ENCODE measurements at regions of chr3 and their contacts with region 1.

Region 1: DNA sequence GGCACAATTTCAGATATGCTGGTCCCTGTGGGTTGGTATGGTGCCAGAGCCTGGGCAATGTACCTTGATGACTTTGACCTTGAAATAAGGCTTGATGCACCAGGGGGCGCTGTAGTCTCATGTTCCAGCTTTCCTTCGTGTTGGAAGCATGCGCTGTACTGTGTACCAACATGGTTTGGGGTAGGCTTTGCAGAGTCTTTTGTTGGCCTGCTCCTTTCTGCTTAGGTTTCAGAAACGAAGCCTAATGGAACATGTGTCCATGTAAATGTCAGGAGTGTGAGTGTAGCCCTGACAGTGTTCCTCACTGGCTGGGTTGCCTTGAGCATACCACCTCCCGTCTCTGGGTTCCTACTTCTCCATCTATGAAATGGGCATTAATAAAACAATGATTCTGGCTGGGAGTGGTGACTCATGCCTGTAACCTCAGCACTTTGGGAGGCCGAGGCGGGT is 3.6 kb upstream of the CCR4 start:
- DNase-seq: peak; percentile 83 to 98 (median 92)
- ATAC-seq: peak; percentile 68
- H3K4me3 ChIP-seq: no peak overlapping the region
- H3K4me3 Mint-ChIP-seq: no peak overlapping the region
- H3K27ac ChIP-seq: no peak overlapping the region
- H3K27ac Mint-ChIP-seq: no peak overlapping the region
- H3K4me1 ChIP-seq: peaks cover 30% of the 10 kb centered on the region
- H3K4me1 Mint-ChIP-seq: peaks cover 47% of the 10 kb centered on the region
- H3K27me3 ChIP-seq: no peaks in the 10 kb centered on the region
- H3K27me3 Mint-ChIP-seq: no peaks in the 10 kb centered on the region
- CTCF ChIP-seq: peak; percentile 85

Region 2: DNA sequence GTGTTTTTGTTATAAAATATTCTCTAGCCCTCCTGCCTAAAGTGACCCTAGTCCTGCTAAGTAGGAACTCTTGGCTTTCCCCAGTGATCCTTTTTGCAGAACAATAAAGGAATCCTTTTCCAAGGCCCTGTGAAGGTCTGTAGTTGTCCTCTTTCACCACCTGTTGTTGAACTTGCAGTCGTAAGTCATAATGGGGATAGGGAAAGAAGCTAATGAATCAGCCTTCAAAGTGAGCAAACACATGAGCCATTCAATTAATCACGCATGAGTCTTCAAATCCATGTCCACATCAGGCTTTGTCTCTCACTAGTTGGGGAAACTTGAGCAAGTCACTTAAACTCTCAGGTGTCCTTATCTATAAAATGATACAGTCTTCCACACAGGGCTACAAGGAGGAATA is 938.7 kb before region 1 on chr3:
- CTCF ChIA-PET with region 1: no interaction called
- POLR2A ChIA-PET with region 1: no interaction called
- intact Hi-C with region 1: no loop called
- DNase-seq: no peak
- ATAC-seq: no peak
- H3K4me3 ChIP-seq: no peak overlapping the region
- H3K4me3 Mint-ChIP-seq: no peak overlapping the region
- H3K27ac ChIP-seq: no peak overlapping the region
- H3K27ac Mint-ChIP-seq: no peak overlapping the region
- H3K4me1 ChIP-seq: no peaks in the 10 kb centered on the region
- H3K4me1 Mint-ChIP-seq: peaks cover 8% of the 10 kb centered on the region
- H3K27me3 ChIP-seq: peaks cover 0 to 4% of the 10 kb centered on the region in 2 experiments
- H3K27me3 Mint-ChIP-seq: peaks cover 28% of the 10 kb centered on the region
- CTCF ChIP-seq: no peak

Region 3: GRCh38 chr3:33006081-33006480 is 58.3 kb after region 1 on chr3:
- CTCF ChIA-PET with region 1: interaction called, 5 read pairs
- POLR2A ChIA-PET with region 1: interaction called, 3 read pairs
- intact Hi-C with region 1: loop called in 1 of 2 experiments (anchors 5 kb)
- DNase-seq: peak in 6 of 14 experiments; percentile 16 to 68 (median 42)
- ATAC-seq: no peak
- H3K4me3 ChIP-seq: no peak overlapping the region
- H3K4me3 Mint-ChIP-seq: no peak overlapping the region
- H3K27ac ChIP-seq: no peak overlapping the region
- H3K27ac Mint-ChIP-seq: peak overlapping the region; percentile 64
- H3K4me1 ChIP-seq: peaks cover 54% of the 10 kb centered on the region
- H3K4me1 Mint-ChIP-seq: peaks cover 45% of the 10 kb centered on the region
- H3K27me3 ChIP-seq: no peaks in the 10 kb centered on the region
- H3K27me3 Mint-ChIP-seq: no peaks in the 10 kb centered on the region
- CTCF ChIP-seq: no peak

Region 4: DNA sequence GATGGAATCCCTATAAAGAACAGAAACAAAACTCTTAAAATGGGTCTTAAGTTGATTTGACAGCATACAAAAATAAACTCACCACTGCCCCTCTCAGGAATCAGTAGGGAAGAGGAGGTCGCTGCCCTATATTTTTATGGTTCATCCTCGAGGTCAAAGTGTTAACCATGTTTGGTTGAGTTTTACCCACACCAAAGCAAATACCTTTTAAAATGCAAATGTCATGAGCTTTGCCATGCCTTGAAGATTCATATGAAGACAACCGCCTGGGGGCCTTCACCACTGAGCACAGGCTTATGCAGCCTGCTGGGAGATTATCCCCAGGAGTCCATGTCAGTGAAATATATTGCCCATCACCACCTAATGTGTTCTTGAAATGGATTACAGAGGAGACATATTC is 83.0 kb after region 1 on chr3:
- CTCF ChIA-PET with region 1: interaction called, 17 read pairs
- POLR2A ChIA-PET with region 1: no interaction called
- intact Hi-C with region 1: no loop called
- DNase-seq: peak in 6 of 14 experiments; percentile 16 to 77 (median 58)
- ATAC-seq: peak; percentile 79
- H3K4me3 ChIP-seq: no peak overlapping the region
- H3K4me3 Mint-ChIP-seq: no peak overlapping the region
- H3K27ac ChIP-seq: no peak overlapping the region
- H3K27ac Mint-ChIP-seq: peak overlapping the region; percentile 50
- H3K4me1 ChIP-seq: peaks cover 18% of the 10 kb centered on the region
- H3K4me1 Mint-ChIP-seq: peaks cover 25% of the 10 kb centered on the region
- H3K27me3 ChIP-seq: no peaks in the 10 kb centered on the region
- H3K27me3 Mint-ChIP-seq: no peaks in the 10 kb centered on the region
- CTCF ChIP-seq: peak; percentile 33

Region 5: DNA sequence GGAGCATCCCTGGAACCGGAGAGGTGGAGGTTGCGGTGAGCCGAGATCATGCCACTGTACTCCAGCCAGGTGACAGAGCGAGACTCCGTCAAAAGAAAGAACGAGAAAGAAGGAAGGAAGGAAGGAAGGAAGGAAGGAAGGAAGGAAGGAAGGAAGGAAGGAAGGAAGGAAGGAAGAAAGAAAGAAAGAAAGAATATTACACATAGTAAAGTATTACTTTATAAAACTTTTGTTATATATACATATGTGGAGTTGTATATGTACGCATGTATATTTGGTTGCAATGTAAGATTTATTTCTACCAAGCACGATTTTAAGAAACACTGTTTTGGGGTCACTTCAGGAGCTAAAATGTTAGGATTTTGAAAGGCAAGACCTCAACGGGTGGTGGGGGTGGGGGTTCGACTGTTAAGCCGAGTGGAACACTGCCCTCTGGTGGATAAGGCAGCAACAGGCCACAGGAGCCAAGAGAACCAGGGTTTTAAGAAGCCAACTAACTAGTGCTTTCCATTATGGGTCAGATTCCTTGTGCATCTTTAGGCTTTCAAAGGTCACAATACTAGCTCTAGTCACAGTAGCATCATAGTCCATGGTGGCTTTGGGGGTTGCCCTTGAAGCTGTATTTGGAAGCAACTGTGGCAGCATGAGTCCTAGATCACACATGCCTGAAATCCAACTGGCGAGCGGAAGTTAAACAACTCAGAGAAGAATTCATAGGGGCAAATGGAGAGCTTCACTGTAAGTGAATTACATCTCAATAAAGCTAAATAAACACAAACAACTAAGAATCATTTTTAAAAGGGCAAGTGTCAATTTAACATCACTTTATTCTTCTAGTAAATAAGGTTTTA is 126.6 kb after region 1 on chr3:
- CTCF ChIA-PET with region 1: interaction called, 52 read pairs
- POLR2A ChIA-PET with region 1: interaction called, 6 read pairs
- intact Hi-C with region 1: loop called (anchors 1 kb)
- DNase-seq: peak; percentile 59 to 85 (median 64)
- ATAC-seq: peak; percentile 81
- H3K4me3 ChIP-seq: no peak overlapping the region
- H3K4me3 Mint-ChIP-seq: no peak overlapping the region
- H3K27ac ChIP-seq: no peak overlapping the region
- H3K27ac Mint-ChIP-seq: no peak overlapping the region
- H3K4me1 ChIP-seq: peaks cover 8% of the 10 kb centered on the region
- H3K4me1 Mint-ChIP-seq: peaks cover 44% of the 10 kb centered on the region
- H3K27me3 ChIP-seq: no peaks in the 10 kb centered on the region
- H3K27me3 Mint-ChIP-seq: no peaks in the 10 kb centered on the region
- CTCF ChIP-seq: peak; percentile 81

Region 6: DNA sequence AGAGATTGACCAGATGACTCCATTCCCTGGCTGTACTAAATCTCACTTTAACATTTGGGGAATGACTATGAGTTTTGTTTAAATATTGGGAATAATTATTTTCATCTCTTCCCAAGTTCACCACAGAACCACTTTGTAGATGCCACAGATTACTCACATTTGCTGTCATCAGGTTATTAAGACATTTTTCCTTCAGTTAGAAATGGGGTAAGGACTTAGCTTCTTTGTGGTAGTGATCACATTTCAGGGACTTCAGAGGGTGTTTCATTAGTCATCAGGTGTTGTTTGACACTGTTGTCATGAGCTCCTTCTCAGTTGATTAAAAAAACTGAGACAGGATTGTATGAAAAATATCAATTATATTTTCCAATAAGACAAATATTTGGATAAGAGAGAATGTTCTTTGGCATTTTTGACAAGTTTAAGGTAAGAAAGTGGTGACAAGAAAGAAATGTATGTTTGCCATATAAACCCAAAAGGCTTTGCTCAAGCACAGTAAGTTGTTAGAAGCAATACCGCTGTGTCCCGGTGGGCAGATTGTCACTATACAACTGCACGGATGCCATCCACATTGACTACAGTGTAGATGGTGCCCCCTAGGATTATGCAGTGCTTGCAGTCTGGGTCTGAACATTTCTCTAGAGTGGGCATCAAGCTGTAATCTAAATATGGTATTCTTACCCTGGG is 351.7 kb after region 1 on chr3:
- CTCF ChIA-PET with region 1: no interaction called
- POLR2A ChIA-PET with region 1: no interaction called
- intact Hi-C with region 1: no loop called
- DNase-seq: no peak
- ATAC-seq: no peak
- H3K4me3 ChIP-seq: no peak overlapping the region
- H3K4me3 Mint-ChIP-seq: no peak overlapping the region
- H3K27ac ChIP-seq: no peak overlapping the region
- H3K27ac Mint-ChIP-seq: no peak overlapping the region
- H3K4me1 ChIP-seq: no peaks in the 10 kb centered on the region
- H3K4me1 Mint-ChIP-seq: no peaks in the 10 kb centered on the region
- H3K27me3 ChIP-seq: no peaks in the 10 kb centered on the region
- H3K27me3 Mint-ChIP-seq: no peaks in the 10 kb centered on the region
- CTCF ChIP-seq: no peak

Region 7: GRCh38 chr3:33372218-33373081 is 424.6 kb after region 1 on chr3:
- CTCF ChIA-PET with region 1: interaction called, 12 read pairs
- POLR2A ChIA-PET with region 1: interaction called, 5 read pairs
- intact Hi-C with region 1: loop called (anchors 1 kb)
- DNase-seq: peak; percentile 6 to 67 (median 28)
- ATAC-seq: peak; percentile 75
- H3K4me3 ChIP-seq: no peak overlapping the region
- H3K4me3 Mint-ChIP-seq: no peak overlapping the region
- H3K27ac ChIP-seq: no peak overlapping the region
- H3K27ac Mint-ChIP-seq: no peak overlapping the region
- H3K4me1 ChIP-seq: peaks cover 5% of the 10 kb centered on the region
- H3K4me1 Mint-ChIP-seq: peaks cover 5% of the 10 kb centered on the region
- H3K27me3 ChIP-seq: no peaks in the 10 kb centered on the region
- H3K27me3 Mint-ChIP-seq: peaks cover 16% of the 10 kb centered on the region
- CTCF ChIP-seq: peak; percentile 91

Region 8: GRCh38 chr3:34000301-34000700 is 1052.5 kb after region 1 on chr3:
- CTCF ChIA-PET with region 1: no interaction called
- POLR2A ChIA-PET with region 1: no interaction called
- intact Hi-C with region 1: no loop called
- DNase-seq: no peak
- ATAC-seq: no peak
- H3K4me3 ChIP-seq: no peak overlapping the region
- H3K4me3 Mint-ChIP-seq: no peak overlapping the region
- H3K27ac ChIP-seq: no peak overlapping the region
- H3K27ac Mint-ChIP-seq: no peak overlapping the region
- H3K4me1 ChIP-seq: no peaks in the 10 kb centered on the region
- H3K4me1 Mint-ChIP-seq: no peaks in the 10 kb centered on the region
- H3K27me3 ChIP-seq: no peaks in the 10 kb centered on the region
- H3K27me3 Mint-ChIP-seq: no peaks in the 10 kb centered on the region
- CTCF ChIP-seq: no peak

Measured in CD4-positive, alpha-beta T cell (primary cell).